Mammary epithelial cell (primary cell): ENCODE measurements at regions of chr2 and their contacts with region 1.

Region 1: DNA sequence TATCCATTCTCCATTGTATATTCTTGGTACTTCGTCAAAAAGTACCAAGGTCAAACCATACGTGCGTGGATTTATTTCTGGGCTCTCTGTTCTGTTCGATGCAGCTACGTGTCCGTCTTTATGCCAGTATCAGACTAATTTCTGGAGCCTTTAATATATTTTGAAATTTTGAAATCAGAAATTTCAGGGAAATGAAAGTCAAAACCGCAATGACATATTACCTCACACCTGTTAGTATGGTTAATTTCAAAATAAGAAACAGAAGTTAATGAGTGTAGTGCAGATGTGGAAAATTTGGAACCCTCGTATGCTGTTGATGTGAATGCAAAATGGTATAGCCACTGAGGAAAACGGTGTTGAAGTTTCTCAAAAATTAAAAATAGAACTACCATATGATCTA is 156.1 kb upstream of the TRIB2 start:
- DNase-seq: no peak
- H3K4me3 ChIP-seq: no peak overlapping the region
- H3K27ac ChIP-seq: no peak overlapping the region
- H3K4me1 ChIP-seq: peaks cover 12% of the 10 kb centered on the region
- H3K27me3 ChIP-seq: no peaks in the 10 kb centered on the region
- CTCF ChIP-seq: no peak

Region 2: DNA sequence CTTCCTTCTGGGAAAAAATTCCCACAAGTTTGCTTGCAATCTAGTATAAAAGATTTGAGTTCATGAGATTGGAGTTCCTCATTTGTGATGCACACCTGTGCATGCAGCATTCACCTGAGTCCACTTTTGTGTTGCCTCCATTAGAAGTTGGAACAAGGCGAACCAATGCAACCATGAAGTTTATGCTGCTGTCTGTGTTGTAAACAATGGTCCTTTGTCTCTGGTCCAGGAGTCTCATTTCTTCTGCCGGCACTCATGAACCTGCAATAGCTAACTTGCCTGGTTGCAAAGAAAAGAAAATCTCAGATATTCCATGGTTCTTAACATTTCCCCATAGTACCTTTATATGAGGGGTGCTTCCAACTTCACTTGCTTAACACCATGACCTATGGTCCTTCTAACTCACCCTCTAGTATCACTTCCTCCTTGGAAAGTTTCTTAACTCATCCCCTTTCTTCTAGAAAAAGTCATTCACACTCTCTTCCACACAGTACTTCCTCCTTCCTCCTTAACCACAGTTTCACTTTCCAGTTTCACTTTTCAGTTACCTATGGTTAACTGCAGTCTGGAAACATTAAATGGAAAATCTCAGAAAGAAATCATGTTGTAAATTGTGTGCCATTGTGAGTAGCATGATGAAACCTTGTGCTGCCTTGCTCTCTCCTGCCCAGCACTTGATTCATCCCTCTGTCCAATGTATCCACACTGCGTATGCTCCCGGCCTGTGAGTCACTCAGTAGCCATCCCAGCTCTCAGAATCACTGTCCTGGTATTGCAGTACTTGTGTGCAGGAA is 27.3 kb after region 1 on chr2:
- CTCF ChIA-PET with region 1: interaction called, 10 read pairs
- dilution Hi-C with region 1: no loop called
- in situ Hi-C with region 1: no loop called
- intact Hi-C with region 1: no loop called
- DNase-seq: peak; percentile 90
- H3K4me3 ChIP-seq: no peak overlapping the region
- H3K27ac ChIP-seq: peak overlapping the region; percentile 67
- H3K4me1 ChIP-seq: peaks cover 12% of the 10 kb centered on the region
- H3K27me3 ChIP-seq: no peaks in the 10 kb centered on the region
- CTCF ChIP-seq: no peak